SK-N-SH (cell line): ENCODE measurements at regions of chr11 and their contacts with region 1.

Region 1: DNA sequence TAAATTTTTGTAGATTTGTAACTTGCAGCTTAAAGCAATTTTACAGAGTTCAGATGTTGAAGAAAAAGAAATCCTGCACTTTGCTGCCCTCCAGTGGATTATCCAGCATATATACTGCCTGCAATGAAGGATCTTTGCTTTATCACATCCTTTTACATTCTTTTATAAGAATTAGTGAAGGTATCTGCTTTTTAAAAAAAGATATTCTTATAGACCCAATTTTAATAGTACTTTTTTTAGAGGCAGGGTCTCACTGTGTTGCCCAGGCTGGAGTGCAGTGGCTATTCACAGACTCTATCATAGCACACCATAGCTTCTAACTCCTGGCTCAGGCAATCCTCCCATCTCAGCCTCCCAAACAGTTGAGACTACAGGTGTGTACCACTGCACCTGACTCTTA is 60.7 kb downstream of the TTC17 start:
- DNase-seq: peak; percentile 26
- H3K4me3 ChIP-seq: no peak overlapping the region; a peak in 1 of 4 replicates
- H3K27ac ChIP-seq: no peak overlapping the region
- H3K4me1 ChIP-seq: no peaks in the 10 kb centered on the region; a peak in 1 of 4 replicates
- H3K27me3 ChIP-seq: no peaks in the 10 kb centered on the region
- CTCF ChIP-seq: peak; percentile 86
- EP300 ChIP-seq: no peak
- RAD21 ChIP-seq: peak; percentile 68

Region 2: DNA sequence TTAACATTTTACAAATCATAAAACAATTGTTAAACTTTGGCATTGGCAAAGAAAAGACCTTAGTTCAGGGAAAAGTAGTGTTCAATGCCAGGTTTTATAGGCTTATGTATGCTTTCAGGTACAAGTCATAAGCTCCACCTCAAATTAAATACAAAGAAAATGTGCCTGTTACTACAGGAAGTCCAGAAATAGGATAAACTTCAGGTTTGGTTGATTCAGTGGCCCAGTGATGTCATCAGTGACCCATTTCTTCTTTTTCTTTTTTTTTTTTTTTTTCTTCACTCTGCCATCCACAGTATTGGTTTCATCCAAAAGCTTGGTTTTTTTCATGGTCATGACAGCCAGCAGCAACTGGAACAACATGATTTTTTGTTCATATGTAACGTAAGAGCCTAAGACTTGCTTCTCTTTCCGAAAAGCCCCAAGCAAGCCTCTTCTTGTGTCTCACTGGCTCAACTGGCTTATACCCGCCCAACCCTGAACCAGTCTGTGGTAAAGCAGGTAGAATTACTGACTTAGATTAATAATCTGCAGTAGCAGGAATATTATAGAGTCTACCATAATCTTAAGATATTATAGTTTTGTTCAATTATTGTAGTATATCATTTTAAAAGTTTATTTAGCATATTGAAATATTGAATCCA is 14.5 kb before region 1 on chr11:
- CTCF ChIA-PET with region 1: interaction called, 26 read pairs
- POLR2A ChIA-PET with region 1: no interaction called
- DNase-seq: no peak
- H3K4me3 ChIP-seq: no peak overlapping the region
- H3K27ac ChIP-seq: no peak overlapping the region
- H3K4me1 ChIP-seq: no peaks in the 10 kb centered on the region
- H3K27me3 ChIP-seq: no peaks in the 10 kb centered on the region
- CTCF ChIP-seq: no peak
- EP300 ChIP-seq: no peak
- RAD21 ChIP-seq: no peak

Region 3: GRCh38 chr11:43434893-43435292 is 15.4 kb after region 1 on chr11:
- CTCF ChIA-PET with region 1: interaction called, 17 read pairs
- POLR2A ChIA-PET with region 1: no interaction called
- DNase-seq: no peak
- H3K4me3 ChIP-seq: no peak overlapping the region
- H3K27ac ChIP-seq: no peak overlapping the region
- H3K4me1 ChIP-seq: no peaks in the 10 kb centered on the region
- H3K27me3 ChIP-seq: no peaks in the 10 kb centered on the region
- CTCF ChIP-seq: no peak
- EP300 ChIP-seq: no peak
- RAD21 ChIP-seq: no peak